Activated CD8-positive, alpha-beta memory T cell treated with anti-CD3 and anti-CD28 coated beads, Interleukin-2, amount 10 ng/mL, durations not matched to agents 7 days and 5 days (primary cell): ENCODE measurements at regions of chr11 and their contacts with region 1.

Region 1: GRCh38 chr11:65111744-65112414 is at the start of gene TM7SF2:
- DNase-seq: peak; percentile 97
- ATAC-seq: peak; percentile 83
- H3K4me3 Mint-ChIP-seq: peak within 1 kb of the TSS; percentile 80
- H3K27ac Mint-ChIP-seq: peak within 1 kb of the TSS; percentile 85
- H3K4me1 Mint-ChIP-seq: peaks cover 49% of the 10 kb centered on the region
- H3K27me3 Mint-ChIP-seq: no peaks in the 10 kb centered on the region
- total RNA-seq, gene TM7SF2: 21.0 to 26.2 TPM

Region 2: DNA sequence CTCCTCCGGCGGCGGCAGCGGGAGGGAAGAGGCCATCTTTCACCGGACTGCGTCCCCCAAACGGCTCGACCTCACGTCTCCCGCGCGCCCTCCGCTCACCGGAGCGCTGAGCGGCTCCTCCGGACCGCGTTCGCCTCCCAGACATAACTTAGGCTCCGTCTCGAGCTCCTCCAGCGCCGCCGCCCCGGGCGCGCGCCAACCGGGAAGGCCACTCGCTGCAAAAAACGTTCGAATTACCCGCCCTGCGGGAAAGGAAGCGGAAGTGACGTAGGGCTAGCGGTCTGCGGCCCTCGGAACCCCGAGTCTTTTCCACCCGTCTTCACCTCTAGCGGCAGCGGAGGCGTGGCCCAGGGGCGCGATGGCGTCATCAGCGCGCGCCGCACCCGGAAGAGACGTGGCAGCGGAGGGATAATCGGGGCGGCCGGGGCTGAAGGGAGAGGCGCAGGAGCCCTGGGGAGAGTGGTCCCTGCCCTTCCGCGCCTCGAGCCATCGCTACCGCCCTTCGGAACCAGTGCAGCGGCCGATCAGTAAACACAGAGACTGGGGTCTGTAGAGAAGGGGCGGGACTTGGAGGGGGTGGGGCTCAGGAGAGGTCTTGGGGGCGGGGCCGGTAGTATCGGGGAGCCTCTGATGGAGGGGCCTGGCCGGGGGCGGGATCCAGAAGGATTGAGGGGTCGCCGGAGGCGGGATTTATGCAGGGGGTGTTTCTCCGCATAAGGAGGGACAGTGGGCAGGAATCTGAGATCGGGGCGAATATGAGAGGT is 27.9 kb before region 1 on chr11 and contains the starts of genes CDCA5 and ZFPL1:
- CTCF ChIA-PET with region 1: interaction called, 10 read pairs
- DNase-seq: peak; percentile 97
- ATAC-seq: peak; percentile 82
- H3K4me3 Mint-ChIP-seq: peak within 1 kb of the TSS; percentile 98
- H3K27ac Mint-ChIP-seq: peak within 1 kb of the TSS; percentile 99
- H3K4me1 Mint-ChIP-seq: peaks cover 54% of the 10 kb centered on the region
- H3K27me3 Mint-ChIP-seq: peaks cover 2% of the 10 kb centered on the region
- total RNA-seq, gene CDCA5: 128 to 147 TPM
- total RNA-seq, gene ZFPL1: 28.3 to 32.4 TPM

Region 3: DNA sequence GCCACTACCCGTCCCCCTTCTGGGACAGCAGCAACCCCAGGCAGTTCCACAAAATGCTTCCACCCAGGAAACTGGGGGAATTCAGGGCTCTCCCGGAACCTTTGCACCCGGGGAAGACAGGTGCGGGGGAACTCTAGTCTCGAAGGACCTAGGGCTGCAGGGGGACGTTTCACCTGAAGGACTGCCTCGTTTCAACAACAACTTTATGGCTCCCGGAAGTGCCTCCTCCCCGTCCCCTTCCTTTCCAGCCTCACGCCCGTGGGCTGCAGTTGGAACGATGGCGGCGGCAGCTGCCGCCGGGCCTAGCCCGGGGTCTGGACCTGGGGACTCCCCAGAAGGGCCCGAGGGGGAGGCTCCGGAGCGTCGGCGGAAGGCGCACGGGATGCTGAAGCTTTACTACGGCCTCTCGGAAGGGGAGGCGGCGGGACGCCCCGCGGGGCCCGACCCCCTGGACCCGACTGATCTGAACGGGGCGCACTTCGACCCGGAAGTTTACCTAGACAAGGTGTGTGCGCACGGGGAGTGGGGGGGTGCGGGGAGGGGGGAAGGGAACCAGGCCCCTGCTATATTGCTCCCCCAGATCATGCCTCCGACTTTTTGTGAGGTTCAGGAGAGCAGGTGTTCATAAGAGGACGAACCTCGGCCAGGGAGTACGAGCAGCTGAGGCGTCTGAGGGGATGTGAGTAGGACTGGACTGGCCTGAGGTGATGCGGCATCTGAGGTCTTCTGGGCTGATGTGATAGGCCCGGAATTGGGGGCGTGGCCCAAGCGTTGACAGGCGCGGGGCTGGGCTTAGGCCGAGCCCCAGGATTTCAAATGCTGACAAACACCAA is 15.7 kb before region 1 on chr11 and contains the start of gene VPS51:
- CTCF ChIA-PET with region 1: interaction called, 114 read pairs
- DNase-seq: peak; percentile 94
- ATAC-seq: peak; percentile 96
- H3K4me3 Mint-ChIP-seq: peak within 1 kb of the TSS; percentile 94
- H3K27ac Mint-ChIP-seq: peak within 1 kb of the TSS; percentile 96
- H3K4me1 Mint-ChIP-seq: peaks cover 21% of the 10 kb centered on the region
- H3K27me3 Mint-ChIP-seq: no peaks in the 10 kb centered on the region
- total RNA-seq, gene VPS51: 104 to 116 TPM

Region 4: GRCh38 chr11:65134386-65135253 is 22.7 kb after region 1 on chr11 and contains the start of gene SYVN1:
- CTCF ChIA-PET with region 1: interaction called, 31 read pairs
- DNase-seq: peak; percentile 93
- ATAC-seq: peak; percentile 91
- H3K4me3 Mint-ChIP-seq: peak within 1 kb of the TSS; percentile 96
- H3K27ac Mint-ChIP-seq: peak within 1 kb of the TSS; percentile 100
- H3K4me1 Mint-ChIP-seq: peaks cover 34% of the 10 kb centered on the region
- H3K27me3 Mint-ChIP-seq: no peaks in the 10 kb centered on the region
- total RNA-seq, gene SYVN1: 34.4 to 35.1 TPM

Region 5: DNA sequence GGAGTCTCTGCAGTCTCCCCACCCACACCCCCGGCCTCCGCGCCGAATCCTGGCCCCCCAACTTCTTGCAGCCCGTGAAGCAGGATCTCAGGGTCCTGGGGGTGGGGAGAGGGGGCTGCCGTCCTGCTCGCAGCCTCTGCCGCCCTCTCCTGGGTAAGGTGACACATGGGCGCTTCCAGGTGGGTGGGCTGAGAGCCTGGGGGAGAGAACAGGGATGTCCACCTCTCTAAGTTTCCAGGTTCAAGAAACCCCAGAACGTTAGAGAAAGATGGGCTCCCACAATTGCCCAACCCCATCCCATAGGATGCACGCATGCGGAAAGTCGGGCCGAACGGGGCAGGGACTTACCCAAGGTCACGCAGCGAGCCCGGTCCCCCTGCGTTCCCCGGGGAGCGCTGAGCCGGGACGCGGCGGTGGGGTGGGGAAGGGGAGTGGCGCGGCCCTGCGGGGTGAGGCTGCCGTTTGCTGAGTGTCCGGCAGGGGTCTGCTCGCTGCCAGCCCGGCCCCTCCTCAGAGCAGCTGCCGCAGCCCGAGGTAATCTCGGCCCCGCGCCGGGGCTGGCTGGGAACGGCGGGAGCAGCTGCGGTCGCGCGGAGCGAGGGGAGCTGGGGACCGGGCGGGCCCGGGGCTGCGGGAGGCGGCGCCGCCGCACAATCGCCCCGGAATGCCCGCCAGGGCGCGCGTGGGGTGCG is 69.1 kb after region 1 on chr11:
- CTCF ChIA-PET with region 1: interaction called, 36 read pairs
- DNase-seq: peak; percentile 72
- ATAC-seq: peak; percentile 79
- H3K4me3 Mint-ChIP-seq: peak overlapping the region; percentile 78
- H3K27ac Mint-ChIP-seq: peak overlapping the region; percentile 68
- H3K4me1 Mint-ChIP-seq: peaks cover 19% of the 10 kb centered on the region
- H3K27me3 Mint-ChIP-seq: no peaks in the 10 kb centered on the region

Region 6: GRCh38 chr11:65194564-65194963 is 82.7 kb after region 1 on chr11:
- CTCF ChIA-PET with region 1: no interaction called
- DNase-seq: no peak
- ATAC-seq: no peak
- H3K4me3 Mint-ChIP-seq: no peak overlapping the region
- H3K27ac Mint-ChIP-seq: no peak overlapping the region
- H3K4me1 Mint-ChIP-seq: no peaks in the 10 kb centered on the region
- H3K27me3 Mint-ChIP-seq: no peaks in the 10 kb centered on the region

Region 7: DNA sequence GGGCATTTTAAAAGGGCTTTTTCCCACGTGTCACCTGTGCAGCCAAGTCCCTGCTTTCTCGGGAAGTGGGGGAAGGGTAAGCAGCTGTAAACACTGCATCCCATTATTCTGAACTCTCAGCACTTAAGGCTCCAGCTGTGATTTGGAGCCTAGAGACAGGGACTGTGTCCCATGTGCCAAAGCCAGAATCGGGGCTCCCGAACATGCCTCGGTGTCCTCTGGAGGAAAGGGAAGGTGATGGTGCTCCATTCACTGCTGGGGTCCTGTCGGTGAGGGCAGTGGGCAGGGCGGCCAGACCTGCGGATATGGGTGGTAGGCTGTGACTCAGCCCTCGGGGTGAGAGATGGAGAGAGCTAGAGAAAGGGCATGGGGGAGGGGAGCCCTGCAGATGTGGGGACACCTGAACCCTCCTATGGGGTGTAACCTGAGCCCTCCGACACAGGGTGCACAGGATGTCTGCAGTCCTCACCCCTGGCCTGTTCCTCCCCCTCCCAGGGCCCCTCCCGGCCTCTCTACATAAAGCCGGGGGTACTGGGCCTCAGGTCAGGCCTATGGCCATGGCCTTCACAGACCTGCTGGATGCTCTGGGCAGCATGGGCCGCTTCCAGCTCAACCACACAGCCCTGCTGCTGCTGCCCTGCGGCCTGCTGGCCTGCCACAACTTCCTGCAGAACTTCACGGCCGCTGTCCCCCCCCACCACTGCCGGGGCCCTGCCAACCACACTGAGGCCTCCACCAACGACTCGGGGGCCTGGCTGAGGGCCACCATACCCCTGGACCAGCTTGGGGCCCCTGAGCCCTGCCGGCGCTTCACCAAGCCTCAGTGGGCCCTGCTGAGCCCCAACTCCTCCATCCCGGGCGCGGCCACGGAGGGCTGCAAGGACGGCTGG is 101.7 kb after region 1 on chr11:
- CTCF ChIA-PET with region 1: no interaction called
- DNase-seq: peak; percentile 66
- ATAC-seq: peak; percentile 76
- H3K4me3 Mint-ChIP-seq: no peak overlapping the region
- H3K27ac Mint-ChIP-seq: peak overlapping the region; percentile 20
- H3K4me1 Mint-ChIP-seq: peaks cover 35% of the 10 kb centered on the region
- H3K27me3 Mint-ChIP-seq: no peaks in the 10 kb centered on the region

Region 8: DNA sequence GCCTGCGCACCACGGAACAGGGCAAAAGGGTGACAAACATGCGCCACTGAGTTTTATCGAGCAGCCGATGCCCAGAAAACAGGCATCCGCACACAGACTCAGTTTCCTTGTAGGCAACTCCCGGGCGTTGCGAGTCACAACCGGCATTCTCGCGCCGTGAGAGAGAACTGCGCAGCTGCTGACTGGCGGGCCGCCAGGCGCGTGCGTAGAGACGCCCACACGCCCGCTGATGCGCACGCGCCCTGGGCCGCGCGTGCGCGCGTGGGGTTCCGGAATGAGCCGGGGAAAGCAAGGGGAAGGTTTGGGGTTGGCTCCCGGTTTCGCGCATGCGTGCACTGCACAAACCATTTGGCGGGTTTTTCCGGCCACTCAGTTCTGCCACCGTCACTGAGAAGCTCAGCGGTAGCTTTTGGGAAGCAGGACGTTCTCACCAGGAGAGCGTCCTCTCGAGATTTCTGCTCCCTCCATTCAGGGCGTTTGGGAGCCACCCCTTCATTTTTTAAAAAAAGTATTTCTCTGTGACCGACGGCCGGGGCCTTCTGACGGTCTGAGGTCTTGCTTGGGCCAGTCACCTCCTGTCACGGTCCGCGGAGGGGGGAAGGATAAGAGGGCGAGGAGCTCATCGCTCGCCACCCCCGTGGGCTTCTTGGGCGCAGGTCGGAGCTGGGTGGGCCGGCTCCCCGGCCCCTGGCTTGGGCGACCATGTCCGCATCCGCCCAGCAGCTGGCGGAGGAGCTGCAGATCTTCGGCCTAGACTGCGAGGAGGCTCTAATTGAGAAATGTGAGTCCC is 149.9 kb after region 1 on chr11 and contains the start of gene POLA2:
- CTCF ChIA-PET with region 1: interaction called, 11 read pairs
- DNase-seq: peak; percentile 97
- ATAC-seq: peak; percentile 96
- H3K4me3 Mint-ChIP-seq: peak within 1 kb of the TSS; percentile 94
- H3K27ac Mint-ChIP-seq: peak within 1 kb of the TSS; percentile 93
- H3K4me1 Mint-ChIP-seq: peaks cover 49% of the 10 kb centered on the region
- H3K27me3 Mint-ChIP-seq: no peaks in the 10 kb centered on the region
- total RNA-seq, gene POLA2: 79.8 to 89.5 TPM